ENCODE measurements at regions of chr6 and their contacts with region 1.

Region 1: GRCh38 chr6:6315660-6316059 is 4.8 kb downstream of the F13A1 start:
- DNase-seq: no peak
- ATAC-seq: peak; percentile 26; the same call in 2 of the 3 replicates
- H3K4me3 ChIP-seq: no peak overlapping the region
- H3K27ac ChIP-seq: no peak overlapping the region
- H3K4me1 ChIP-seq: peaks cover 11% of the 10 kb centered on the region
- H3K27me3 ChIP-seq: peaks cover 0 to 4% of the 10 kb centered on the region in 2 experiments; a peak in 2 of 4 replicates
- CTCF ChIP-seq: peak; percentile 78 to 89 (median 89)
- EP300 ChIP-seq: no peak
- POLR2A ChIP-seq: no peak
- RAD21 ChIP-seq: peak; percentile 75

Region 2: DNA sequence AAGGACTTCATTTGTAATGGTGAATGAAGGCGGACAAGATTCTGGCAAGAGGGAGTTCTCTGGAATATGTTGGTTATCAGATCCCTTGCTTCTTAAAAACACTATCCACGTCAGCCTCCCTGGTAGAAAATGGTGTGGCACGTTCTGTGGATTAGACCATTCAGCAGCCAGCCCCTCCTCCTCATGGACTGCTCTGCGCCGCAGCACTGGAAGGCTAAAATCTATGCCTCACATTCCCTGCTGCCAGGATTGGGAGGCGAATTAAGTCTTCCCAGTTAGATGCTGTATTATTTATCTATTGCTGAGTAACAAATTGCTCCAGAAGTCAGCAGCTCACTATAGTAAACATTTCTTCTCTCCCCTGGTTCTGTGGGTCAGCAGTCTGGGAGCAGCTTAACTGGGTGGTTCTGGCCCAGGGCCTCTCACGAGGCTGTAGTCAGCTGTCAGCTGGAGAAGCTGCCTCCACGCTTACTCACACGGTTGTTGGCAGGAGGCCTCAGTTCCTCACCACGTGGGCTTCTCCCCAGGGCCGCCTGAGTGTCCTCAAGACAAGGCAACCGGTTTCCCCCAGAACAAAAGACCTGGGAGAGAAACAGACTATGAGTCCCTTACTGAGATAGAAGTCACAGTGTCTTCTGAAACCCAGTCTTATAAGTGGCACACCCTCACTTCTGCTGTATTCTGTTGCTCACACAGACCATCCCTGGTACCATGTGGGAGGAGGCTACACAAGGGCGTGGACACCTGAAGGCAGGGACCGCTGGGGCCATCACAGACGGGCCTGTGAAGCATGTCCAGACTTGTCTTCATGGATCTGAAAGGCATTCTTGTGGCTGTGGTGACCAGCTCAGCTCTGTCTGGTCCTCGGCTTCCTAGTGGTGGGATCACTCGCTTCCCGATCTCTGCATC is 410.0 kb before region 1 on chr6:
- CTCF ChIA-PET with region 1: no interaction called
- POLR2A ChIA-PET with region 1: no interaction called
- RAD21 ChIA-PET with region 1: no interaction called
- SMC1A ChIA-PET with region 1: no interaction called
- in situ Hi-C with region 1: no loop called
- intact Hi-C with region 1: no loop called
- DNase-seq: no peak
- ATAC-seq: no peak
- H3K4me3 ChIP-seq: no peak overlapping the region
- H3K27ac ChIP-seq: no peak overlapping the region
- H3K4me1 ChIP-seq: no peaks in the 10 kb centered on the region
- H3K27me3 ChIP-seq: no peaks in the 10 kb centered on the region
- CTCF ChIP-seq: no peak
- EP300 ChIP-seq: no peak
- POLR2A ChIP-seq: no peak
- RAD21 ChIP-seq: no peak

Region 3: GRCh38 chr6:6057424-6058053 is 258.1 kb before region 1 on chr6:
- CTCF ChIA-PET with region 1: no interaction called
- POLR2A ChIA-PET with region 1: no interaction called
- RAD21 ChIA-PET with region 1: no interaction called
- SMC1A ChIA-PET with region 1: no interaction called
- in situ Hi-C with region 1: no loop called
- intact Hi-C with region 1: loop called (anchors 5 kb)
- DNase-seq: peak; percentile 53
- ATAC-seq: peak; percentile 97
- H3K4me3 ChIP-seq: no peak overlapping the region
- H3K27ac ChIP-seq: no peak overlapping the region
- H3K4me1 ChIP-seq: no peaks in the 10 kb centered on the region
- H3K27me3 ChIP-seq: no peaks in the 10 kb centered on the region; a peak in 2 of 4 replicates
- CTCF ChIP-seq: peak; percentile 54 to 68 (median 66); a peak in 5 of 6 replicates
- EP300 ChIP-seq: no peak
- POLR2A ChIP-seq: no peak
- RAD21 ChIP-seq: peak; percentile 74

Region 4: DNA sequence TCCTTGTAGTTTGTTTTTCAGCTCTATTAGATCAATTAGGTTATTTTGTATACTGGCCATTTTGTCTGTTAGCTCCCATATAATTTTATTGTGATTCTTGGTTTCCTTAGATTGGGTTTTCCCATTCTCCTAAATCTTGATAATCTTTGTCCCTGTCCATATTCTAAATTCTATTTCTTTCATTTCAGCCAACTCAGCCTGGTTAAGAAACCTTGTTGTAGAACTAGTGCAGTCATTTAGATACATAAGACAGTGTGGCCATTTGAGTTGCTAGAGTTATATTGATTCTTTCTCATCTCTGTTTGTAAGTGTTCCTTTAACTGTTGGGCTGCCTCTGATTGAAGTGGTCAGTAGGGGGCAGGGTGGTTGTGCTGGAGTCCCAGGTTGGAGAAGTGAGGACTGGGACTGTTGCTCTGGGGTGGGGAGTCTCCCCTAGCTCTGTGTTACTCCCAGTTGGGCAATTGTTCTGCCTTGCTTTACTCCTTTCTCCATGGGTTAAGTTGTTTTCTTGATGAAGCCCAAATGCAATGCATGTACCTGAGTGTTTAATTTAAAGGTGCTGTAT is 210.1 kb before region 1 on chr6:
- CTCF ChIA-PET with region 1: interaction called, 3 read pairs
- POLR2A ChIA-PET with region 1: no interaction called
- RAD21 ChIA-PET with region 1: no interaction called
- SMC1A ChIA-PET with region 1: interaction called, 4 read pairs
- in situ Hi-C with region 1: no loop called
- intact Hi-C with region 1: loop called (anchors 5 kb)
- DNase-seq: no peak
- ATAC-seq: peak; percentile 92
- H3K4me3 ChIP-seq: no peak overlapping the region
- H3K27ac ChIP-seq: no peak overlapping the region
- H3K4me1 ChIP-seq: no peaks in the 10 kb centered on the region
- H3K27me3 ChIP-seq: no peaks in the 10 kb centered on the region
- CTCF ChIP-seq: peak; percentile 14 to 44 (median 40); a peak in 4 of 6 replicates
- EP300 ChIP-seq: no peak
- POLR2A ChIP-seq: no peak
- RAD21 ChIP-seq: peak; percentile 47

Region 5: DNA sequence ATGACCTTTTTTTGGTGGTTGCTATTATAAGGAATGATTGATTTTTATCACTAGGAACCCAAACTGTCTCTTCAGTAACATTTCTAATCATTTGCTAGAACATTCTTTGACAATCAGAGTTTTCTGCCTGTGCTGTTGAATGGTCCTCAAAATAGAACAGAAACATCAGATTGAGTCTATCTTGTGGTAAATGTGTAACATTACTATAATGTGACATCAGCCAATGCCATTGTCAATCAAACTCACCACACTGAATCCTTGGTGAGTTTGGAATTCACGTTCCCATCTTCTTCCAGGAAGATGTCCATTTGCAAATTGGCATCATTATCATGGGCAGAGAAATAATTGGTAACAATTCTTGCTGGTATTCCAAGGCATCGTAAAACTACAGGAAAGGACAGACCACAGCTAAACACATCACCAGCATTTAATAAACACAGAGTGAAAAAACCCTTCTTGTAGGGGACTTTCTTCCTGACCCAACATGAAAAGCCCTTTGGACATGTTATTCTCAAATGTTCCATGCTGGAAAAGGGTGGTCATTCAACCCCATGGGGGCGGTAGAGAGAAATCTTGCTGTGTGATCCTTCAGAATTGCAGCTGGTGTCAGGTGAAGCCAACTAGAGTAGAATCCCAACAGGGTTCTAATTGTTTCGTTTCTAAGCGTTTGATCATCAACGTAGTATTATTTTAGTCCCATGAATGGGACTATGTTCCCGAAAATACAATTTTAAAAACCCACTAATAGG is 93.7 kb before region 1 on chr6:
- CTCF ChIA-PET with region 1: no interaction called
- POLR2A ChIA-PET with region 1: no interaction called
- RAD21 ChIA-PET with region 1: interaction called, 3 read pairs
- SMC1A ChIA-PET with region 1: interaction called, 4 read pairs
- in situ Hi-C with region 1: no loop called
- intact Hi-C with region 1: loop called (anchors 5 kb)
- DNase-seq: no peak
- ATAC-seq: peak; percentile 68
- H3K4me3 ChIP-seq: no peak overlapping the region
- H3K27ac ChIP-seq: no peak overlapping the region
- H3K4me1 ChIP-seq: no peaks in the 10 kb centered on the region
- H3K27me3 ChIP-seq: no peaks in the 10 kb centered on the region
- CTCF ChIP-seq: peak; percentile 33 to 44 (median 33); a peak in 4 of 6 replicates
- EP300 ChIP-seq: no peak
- POLR2A ChIP-seq: no peak
- RAD21 ChIP-seq: peak; percentile 52

Region 6: DNA sequence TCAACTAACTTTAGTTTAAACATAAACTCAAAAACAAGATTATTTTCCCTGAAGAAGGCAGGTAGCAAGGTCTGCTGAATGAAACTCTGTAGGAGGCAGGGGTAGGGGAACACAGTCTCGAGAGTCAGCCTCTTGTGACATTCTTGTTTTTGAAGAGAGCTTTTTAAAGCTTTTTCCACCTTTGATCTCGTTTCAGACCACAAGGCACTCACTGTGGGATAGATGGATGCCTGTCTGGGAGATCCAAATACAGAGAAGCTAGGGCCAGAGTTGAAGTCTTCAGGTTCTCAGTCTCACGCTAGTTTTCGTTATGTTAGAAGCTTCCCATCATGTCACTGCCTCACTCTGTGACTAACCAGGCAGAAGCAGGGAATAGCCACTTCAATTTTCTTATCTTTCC is 10.1 kb before region 1 on chr6:
- CTCF ChIA-PET with region 1: interaction called, 14 read pairs
- POLR2A ChIA-PET with region 1: no interaction called
- RAD21 ChIA-PET with region 1: no interaction called
- SMC1A ChIA-PET with region 1: interaction called, 6 read pairs
- in situ Hi-C with region 1: no loop called
- intact Hi-C with region 1: no loop called
- DNase-seq: no peak
- ATAC-seq: no peak
- H3K4me3 ChIP-seq: no peak overlapping the region
- H3K27ac ChIP-seq: no peak overlapping the region
- H3K4me1 ChIP-seq: no peaks in the 10 kb centered on the region
- H3K27me3 ChIP-seq: no peaks in the 10 kb centered on the region
- CTCF ChIP-seq: no peak
- EP300 ChIP-seq: no peak
- POLR2A ChIP-seq: no peak
- RAD21 ChIP-seq: no peak

Measured in GM12878 (cell line).